ENCODE measurements at regions of chr2 and their contacts with region 1.

Region 1: GRCh38 chr2:142857247-142858154 is 20.0 kb upstream of the KYNU start:
- DNase-seq: peak in 1 of 2 experiments; percentile 77
- H3K4me3 ChIP-seq: peak overlapping the region; percentile 22
- H3K27ac ChIP-seq: peak overlapping the region; percentile 87
- H3K4me1 ChIP-seq: peaks cover 34% of the 10 kb centered on the region
- H3K27me3 ChIP-seq: no peaks in the 10 kb centered on the region
- CTCF ChIP-seq: no peak

Region 2: DNA sequence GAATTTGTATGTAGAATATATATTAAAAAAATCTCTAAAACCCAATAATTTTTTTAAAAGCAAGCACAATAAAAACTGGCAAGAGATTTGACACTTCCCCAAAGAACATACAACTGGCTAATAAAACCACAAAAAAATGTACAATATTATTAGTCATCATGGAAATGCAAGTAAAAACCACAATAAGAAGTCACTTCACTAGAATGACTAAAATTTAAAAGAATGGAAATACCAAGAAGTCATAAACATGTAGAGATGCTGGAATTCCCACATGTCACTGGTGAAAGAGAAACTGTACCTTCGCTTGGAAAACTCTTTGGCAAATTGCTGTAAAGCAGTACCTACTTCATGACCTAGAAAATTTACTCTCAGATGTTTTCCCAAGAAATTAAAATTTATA is 23.5 kb before region 1 on chr2:
- CTCF ChIA-PET with region 1: no interaction called
- POLR2A ChIA-PET with region 1: no interaction called
- intact Hi-C with region 1: no loop called
- DNase-seq: no peak
- H3K4me3 ChIP-seq: no peak overlapping the region
- H3K27ac ChIP-seq: no peak overlapping the region
- H3K4me1 ChIP-seq: 0 out of 2 replicates have a peak, but pooled peaks cover 8% of the 10 kb centered on the region
- H3K27me3 ChIP-seq: no peaks in the 10 kb centered on the region
- CTCF ChIP-seq: no peak

Region 3: DNA sequence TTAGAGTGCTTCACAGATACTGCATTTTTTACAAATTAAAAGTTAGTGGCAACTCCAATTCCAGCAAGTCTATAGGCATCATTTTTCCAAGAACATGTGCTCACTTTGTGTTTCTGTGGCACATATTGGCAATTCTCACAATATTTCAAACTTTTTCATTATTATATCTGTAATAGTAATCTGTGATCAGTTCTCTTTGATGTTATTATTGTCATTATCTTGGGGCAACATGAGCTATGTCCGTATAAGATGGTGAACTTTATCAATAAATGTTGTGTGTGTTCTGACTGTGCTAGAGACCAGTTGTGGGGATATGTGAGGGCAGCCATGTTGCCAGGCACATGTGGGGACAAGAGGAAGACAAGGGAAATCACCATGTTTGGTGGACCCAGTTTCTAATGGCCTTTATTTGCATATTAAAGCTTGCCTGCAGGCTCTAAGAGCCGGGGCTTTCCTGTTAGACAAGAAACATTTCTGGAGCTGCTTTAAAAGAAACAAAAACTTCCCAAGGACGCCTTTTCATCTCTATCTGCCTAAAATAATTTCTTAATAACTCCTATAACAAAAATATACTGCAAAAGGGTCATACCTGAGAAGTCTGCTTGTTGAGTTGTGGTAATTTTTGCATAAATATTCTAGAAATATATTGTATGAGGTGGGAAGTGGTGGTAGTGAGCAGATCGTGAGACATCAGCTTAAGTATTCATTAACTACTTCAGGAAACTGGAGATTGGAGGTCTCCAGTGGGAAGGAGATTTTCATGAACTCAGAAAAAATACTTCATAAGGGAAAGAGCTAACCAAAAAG is 57.2 kb after region 1 on chr2:
- CTCF ChIA-PET with region 1: no interaction called
- POLR2A ChIA-PET with region 1: interaction called, 10 read pairs
- intact Hi-C with region 1: no loop called
- DNase-seq: no peak
- H3K4me3 ChIP-seq: no peak overlapping the region
- H3K27ac ChIP-seq: no peak overlapping the region
- H3K4me1 ChIP-seq: no peaks in the 10 kb centered on the region
- H3K27me3 ChIP-seq: no peaks in the 10 kb centered on the region
- CTCF ChIP-seq: no peak

Measured in PC-9 (cell line).